ENCODE measurements at regions of chr16 and their contacts with region 1.

Region 1: GRCh38 chr16:7313170-7313569 is 19.5 kb upstream of the RBFOX1 start:
- DNase-seq: peak; percentile 18
- ATAC-seq: peak; percentile 62; the same call in 2 of the 3 replicates
- H3K4me3 ChIP-seq: no peak overlapping the region
- H3K27ac ChIP-seq: no peak overlapping the region
- H3K4me1 ChIP-seq: no peaks in the 10 kb centered on the region
- H3K27me3 ChIP-seq: peaks cover 1 to 21% of the 10 kb centered on the region in 2 experiments; a peak in 2 of 5 replicates
- CTCF ChIP-seq: peak; percentile 36; the same call in 1 of the 2 replicates
- EP300 ChIP-seq: no peak
- POLR2A ChIP-seq: no peak
- RAD21 ChIP-seq: no peak

Region 2: GRCh38 chr16:8305201-8305600 is 992.0 kb after region 1 on chr16:
- CTCF ChIA-PET with region 1: no interaction called
- POLR2A ChIA-PET with region 1: no interaction called
- in situ Hi-C with region 1: no loop called
- intact Hi-C with region 1: loop called (anchors 10 kb)
- DNase-seq: no peak
- ATAC-seq: no peak
- H3K4me3 ChIP-seq: no peak overlapping the region
- H3K27ac ChIP-seq: no peak overlapping the region
- H3K4me1 ChIP-seq: no peaks in the 10 kb centered on the region
- H3K27me3 ChIP-seq: peaks cover 6 to 43% of the 10 kb centered on the region in 2 experiments; a peak in 4 of 5 replicates
- CTCF ChIP-seq: no peak
- EP300 ChIP-seq: no peak
- POLR2A ChIP-seq: no peak
- RAD21 ChIP-seq: no peak